Sciatic nerve (tissue), 2 donors: ENCODE measurements at regions of chr3 and their contacts with region 1.

Region 1: DNA sequence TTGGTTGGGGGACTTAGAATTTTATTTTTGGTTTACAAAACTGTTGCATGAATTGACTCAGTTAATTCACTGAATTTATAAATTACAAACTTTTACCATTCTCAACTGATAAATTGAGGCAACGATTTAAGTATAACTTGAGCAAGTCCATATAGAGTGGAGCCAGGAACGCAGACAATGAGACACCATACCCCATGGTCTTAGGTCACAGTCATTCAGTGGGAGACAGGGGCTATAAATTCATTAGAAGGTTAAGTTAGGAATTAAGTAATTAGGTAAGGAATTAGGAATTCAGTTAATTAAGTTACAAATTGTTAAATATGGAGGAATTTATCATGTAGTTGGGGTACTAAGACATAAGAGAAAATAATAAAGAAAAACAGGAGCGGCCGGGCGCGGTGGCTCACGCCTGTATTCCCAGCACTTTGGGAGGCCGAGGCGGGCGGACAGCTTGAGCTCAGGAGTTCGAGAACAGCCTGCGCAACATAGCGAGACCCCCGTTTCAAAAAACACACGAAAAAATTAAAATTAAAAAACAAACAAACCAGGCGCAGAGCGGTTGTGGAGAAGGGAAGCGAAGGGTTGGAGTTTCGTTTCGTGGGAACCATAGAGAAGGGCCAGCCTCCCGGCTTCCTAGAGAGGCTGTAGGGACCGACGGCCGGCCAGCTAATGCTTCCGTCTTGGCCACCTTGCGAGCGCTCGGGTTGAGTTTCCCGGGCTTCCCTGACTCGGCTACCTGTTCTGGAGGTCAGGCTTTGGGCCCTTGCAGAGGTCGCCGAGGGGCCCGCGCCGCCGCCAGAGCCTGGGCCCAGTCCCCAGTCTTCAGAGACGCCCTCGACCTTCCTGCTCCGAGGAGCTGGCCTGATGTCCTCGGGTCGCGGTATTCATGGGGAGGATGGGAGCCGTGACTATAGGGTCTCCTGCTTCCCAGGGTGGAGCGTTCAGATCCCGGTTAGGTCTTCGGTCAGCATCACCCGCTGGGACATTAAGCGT is at the start of gene ZNF619:
- DNase-seq: peak; percentile 81
- ATAC-seq: peak; percentile 96
- total RNA-seq, gene ZNF619: 7.3 TPM

Region 2: GRCh38 chr3:39601241-39601640 is 875.5 kb before region 1 on chr3:
- intact Hi-C with region 1: no loop called
- DNase-seq: no peak
- ATAC-seq: no peak

Region 3: DNA sequence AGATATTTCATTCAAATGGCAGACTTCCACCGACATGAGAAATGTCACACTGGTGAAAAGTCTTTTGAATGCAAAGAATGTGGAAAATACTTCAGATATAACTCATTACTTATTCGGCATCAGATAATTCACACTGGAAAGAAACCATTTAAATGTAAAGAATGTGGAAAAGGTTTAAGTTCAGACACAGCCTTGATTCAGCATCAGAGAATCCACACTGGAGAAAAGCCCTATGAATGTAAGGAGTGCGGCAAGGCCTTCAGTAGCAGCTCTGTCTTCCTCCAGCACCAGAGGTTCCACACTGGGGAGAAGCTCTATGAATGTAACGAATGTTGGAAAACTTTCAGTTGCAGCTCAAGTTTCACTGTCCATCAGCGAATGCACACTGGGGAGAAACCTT is 39.4 kb after region 1 on chr3:
- intact Hi-C with region 1: loop called (anchors 5 kb)
- DNase-seq: no peak
- ATAC-seq: no peak